Esophagus muscularis mucosa (tissue), 4 donors: ENCODE measurements at regions of chr7 and their contacts with region 1.

Region 1: DNA sequence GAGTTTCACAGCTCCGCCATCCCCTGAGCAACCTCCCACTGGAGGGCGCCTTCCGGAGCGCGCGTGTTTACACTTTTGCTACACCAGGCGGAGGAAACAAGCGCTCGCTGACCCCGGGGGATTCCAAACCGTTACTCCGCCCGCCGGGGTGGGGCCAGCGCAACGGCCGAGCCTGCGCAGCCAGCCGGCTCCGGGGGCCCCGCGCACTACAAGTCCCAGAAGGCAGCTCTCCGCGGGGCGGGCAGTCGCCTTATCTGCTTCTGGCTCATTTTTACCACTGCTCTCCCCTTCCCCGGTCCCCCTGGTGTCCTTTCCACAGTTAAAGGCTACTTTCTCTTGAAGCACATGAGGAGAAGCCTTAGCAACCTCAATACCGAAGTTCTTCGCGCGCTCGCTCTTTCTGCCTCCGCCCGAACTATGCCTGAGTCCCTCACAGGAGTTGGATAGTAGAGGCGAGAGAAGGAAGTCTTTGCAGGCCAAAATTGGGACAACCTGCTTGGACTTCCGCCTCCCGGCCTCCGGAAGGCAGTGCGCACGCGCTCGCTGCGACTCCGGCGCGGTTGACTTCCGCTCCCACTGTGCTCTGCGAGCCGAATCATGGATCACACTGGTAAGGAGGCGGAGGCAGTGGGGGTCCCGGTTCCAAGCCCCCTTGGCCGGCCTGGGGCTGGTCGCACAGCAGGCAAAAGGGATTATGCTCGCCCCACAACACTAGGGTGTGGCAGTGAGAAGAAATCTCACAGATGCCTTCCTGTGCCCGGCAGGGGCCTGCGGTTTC is at the start of gene CBLL1:
- DNase-seq: peak; percentile 98
- H3K4me3 ChIP-seq: peak within 1 kb of the TSS; percentile 80 to 94 (median 88)
- H3K27ac ChIP-seq: peak within 1 kb of the TSS; percentile 93 to 96 (median 95)
- H3K4me1 ChIP-seq: peaks cover 27 to 51% (median 49%) of the 10 kb centered on the region in 4 donors
- H3K27me3 ChIP-seq: no peaks in the 10 kb centered on the region
- CTCF ChIP-seq: peak; percentile 64 to 78 (median 75)
- EP300 ChIP-seq: no peak
- POLR2A ChIP-seq: peak; percentile 57
- total RNA-seq, gene CBLL1: 60.1 to 67.3 (median 63.6) TPM

Region 2: GRCh38 chr7:107462740-107463444 is 280.9 kb before region 1 on chr7:
- intact Hi-C with region 1: loop called (anchors 5 kb)
- DNase-seq: no peak
- H3K4me3 ChIP-seq: no peak overlapping the region
- H3K27ac ChIP-seq: no peak overlapping the region
- H3K4me1 ChIP-seq: peaks cover 0 to 5% (median 0%) of the 10 kb centered on the region in 4 donors
- H3K27me3 ChIP-seq: no peaks in the 10 kb centered on the region
- CTCF ChIP-seq: peak; percentile 77 to 78 (median 77)
- EP300 ChIP-seq: no peak
- POLR2A ChIP-seq: no peak

Region 3: GRCh38 chr7:107816011-107816566 is 72.3 kb after region 1 on chr7:
- intact Hi-C with region 1: loop called (anchors 5 kb)
- DNase-seq: no peak
- H3K4me3 ChIP-seq: no peak overlapping the region
- H3K27ac ChIP-seq: peak overlapping the region; percentile 76 to 86 (median 82)
- H3K4me1 ChIP-seq: peaks cover 0 to 43% (median 29%) of the 10 kb centered on the region in 4 donors
- H3K27me3 ChIP-seq: no peaks in the 10 kb centered on the region
- CTCF ChIP-seq: no peak
- EP300 ChIP-seq: no peak
- POLR2A ChIP-seq: no peak

Region 4: GRCh38 chr7:108016841-108017775 is 273.4 kb after region 1 on chr7:
- intact Hi-C with region 1: loop called (anchors 10 kb)
- DNase-seq: peak; percentile 72
- H3K4me3 ChIP-seq: no peak overlapping the region
- H3K27ac ChIP-seq: peak overlapping the region in 3 of 4 donors; percentile 20 to 41 (median 31)
- H3K4me1 ChIP-seq: peaks cover 0 to 40% (median 26%) of the 10 kb centered on the region in 4 donors
- H3K27me3 ChIP-seq: no peaks in the 10 kb centered on the region
- CTCF ChIP-seq: peak; percentile 40 to 62 (median 49)
- EP300 ChIP-seq: no peak
- POLR2A ChIP-seq: no peak